ENCODE measurements at regions of chr18 and their contacts with region 1.

Region 1: DNA sequence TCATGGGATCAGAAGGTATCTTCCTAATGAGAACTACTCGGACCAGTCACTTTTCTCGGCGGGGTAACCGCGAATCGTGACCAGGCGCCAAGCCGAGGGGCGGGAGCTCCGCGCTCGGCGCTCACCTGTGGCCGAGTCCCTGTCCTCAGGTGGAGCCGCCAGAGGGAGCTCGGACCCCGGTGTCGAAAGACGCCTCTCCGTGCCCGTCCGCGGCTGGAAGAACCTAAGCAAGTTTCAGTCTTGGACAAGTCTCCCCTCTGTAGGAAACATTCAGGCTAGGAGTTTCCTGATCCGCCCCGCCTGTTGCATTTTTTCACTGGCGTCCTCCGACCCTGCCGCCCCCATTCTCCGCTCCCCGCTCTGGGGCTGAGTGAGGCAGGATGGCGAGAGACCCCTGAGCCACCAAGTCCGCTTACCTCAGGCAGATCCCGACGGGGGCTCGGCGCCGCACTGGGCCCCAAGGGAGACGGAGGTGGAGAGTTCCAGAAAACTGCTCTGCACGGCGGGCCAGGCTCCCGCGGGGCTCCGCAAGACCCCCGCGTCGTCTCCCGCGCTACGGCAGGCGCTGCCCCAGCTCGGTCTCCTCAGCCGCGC is 478 bp downstream of the DSEL start:
- DNase-seq: peak; percentile 85
- ATAC-seq: peak; percentile 16
- H3K4me3 ChIP-seq: peak overlapping the region; percentile 96
- H3K27ac ChIP-seq: peak overlapping the region; percentile 96
- H3K4me1 ChIP-seq: peaks cover 15% of the 10 kb centered on the region
- H3K27me3 ChIP-seq: no peaks in the 10 kb centered on the region
- CTCF ChIP-seq: peak; percentile 87
- POLR2A ChIP-seq: no peak; the same call in none of the 2 replicates
- RAD21 ChIP-seq: peak; percentile 92

Region 2: DNA sequence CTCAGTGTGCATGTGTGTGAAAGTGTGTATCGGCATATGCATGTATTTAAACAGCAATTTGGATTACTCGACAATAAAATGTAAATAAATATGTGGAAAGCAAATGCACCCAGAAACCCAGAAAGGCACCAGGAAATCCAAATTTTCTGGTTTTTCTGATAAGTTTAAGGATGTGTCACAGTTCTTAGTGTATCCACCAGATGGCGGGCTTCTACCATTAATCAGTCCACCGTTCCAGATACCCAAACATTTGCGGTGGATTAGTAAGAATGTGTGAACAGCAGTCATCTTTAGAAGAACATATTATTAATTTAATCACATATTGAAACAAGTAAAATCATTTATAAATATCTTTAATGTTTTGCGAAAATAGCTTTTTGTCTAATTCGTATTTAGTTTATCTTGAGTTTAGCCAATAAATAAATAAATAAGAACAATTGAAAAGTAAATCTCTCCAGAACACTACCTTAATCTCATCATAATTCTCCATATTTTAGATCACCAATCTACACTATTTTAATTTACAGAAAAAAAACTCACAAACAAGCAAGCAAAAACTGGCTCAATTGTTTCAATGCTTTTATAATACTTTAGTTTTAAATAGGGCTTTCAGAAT is 298.4 kb before region 1 on chr18:
- CTCF ChIA-PET with region 1: no interaction called
- POLR2A ChIA-PET with region 1: no interaction called
- dilution Hi-C with region 1: no loop called
- in situ Hi-C with region 1: loop called (anchors 5 kb)
- intact Hi-C with region 1: loop called (anchors 1 kb)
- DNase-seq: peak; percentile 78
- ATAC-seq: peak; percentile 95
- H3K4me3 ChIP-seq: no peak overlapping the region
- H3K27ac ChIP-seq: no peak overlapping the region
- H3K4me1 ChIP-seq: no peaks in the 10 kb centered on the region
- H3K27me3 ChIP-seq: no peaks in the 10 kb centered on the region
- CTCF ChIP-seq: peak; percentile 86
- POLR2A ChIP-seq: 0 out of 2 replicates have a peak, but pooled peaks have one; percentile 32
- RAD21 ChIP-seq: peak; percentile 94

Region 3: DNA sequence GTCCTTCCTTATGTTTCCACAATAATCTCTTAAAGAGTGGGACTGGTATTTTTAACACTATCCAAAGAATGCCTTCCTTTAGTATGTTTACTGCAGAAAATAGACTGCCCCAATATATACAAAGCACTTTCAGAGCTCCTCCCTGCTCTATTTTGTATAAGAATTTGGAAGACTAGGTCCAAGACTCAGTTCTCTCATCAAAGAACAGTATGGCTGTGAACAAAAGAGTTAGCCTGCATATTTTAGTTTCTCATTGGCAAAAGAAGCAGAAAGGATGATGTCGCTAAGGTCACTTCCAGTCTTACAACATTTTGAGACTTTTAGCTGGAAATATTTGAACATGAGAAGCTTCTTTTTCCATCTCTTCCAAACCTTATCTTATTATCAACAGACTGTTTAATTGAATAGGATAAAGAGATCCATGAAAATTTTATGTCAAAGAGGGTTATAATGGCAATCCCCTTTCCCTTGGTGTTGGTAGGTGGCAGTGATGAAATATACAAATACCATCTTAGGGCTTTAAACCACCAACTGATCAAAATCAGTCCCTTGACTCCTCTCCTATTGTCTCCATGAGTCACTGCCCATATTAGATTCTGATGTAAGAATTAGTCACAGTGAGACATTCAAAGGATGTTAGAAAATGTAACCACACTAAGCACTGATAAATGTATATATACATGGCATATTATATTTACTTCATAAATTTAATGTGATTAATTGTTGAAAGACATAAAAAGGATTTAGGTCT is 267.3 kb after region 1 on chr18:
- CTCF ChIA-PET with region 1: no interaction called
- POLR2A ChIA-PET with region 1: no interaction called
- dilution Hi-C with region 1: no loop called
- in situ Hi-C with region 1: no loop called
- intact Hi-C with region 1: loop called (anchors 5 kb)
- DNase-seq: peak; percentile 93
- ATAC-seq: peak; percentile 81
- H3K4me3 ChIP-seq: no peak overlapping the region
- H3K27ac ChIP-seq: peak overlapping the region; percentile 21; the same call in 1 of the 2 replicates
- H3K4me1 ChIP-seq: peaks cover 5% of the 10 kb centered on the region; the same call in 1 of the 2 replicates
- H3K27me3 ChIP-seq: no peaks in the 10 kb centered on the region
- CTCF ChIP-seq: no peak
- POLR2A ChIP-seq: no peak
- RAD21 ChIP-seq: no peak

Region 4: GRCh38 chr18:67932271-67932670 is 416.2 kb after region 1 on chr18:
- CTCF ChIA-PET with region 1: no interaction called
- POLR2A ChIA-PET with region 1: no interaction called
- dilution Hi-C with region 1: no loop called
- in situ Hi-C with region 1: no loop called
- intact Hi-C with region 1: loop called (anchors 5 kb)
- DNase-seq: no peak
- ATAC-seq: no peak
- H3K4me3 ChIP-seq: no peak overlapping the region
- H3K27ac ChIP-seq: no peak overlapping the region
- H3K4me1 ChIP-seq: peaks cover 6% of the 10 kb centered on the region
- H3K27me3 ChIP-seq: no peaks in the 10 kb centered on the region
- CTCF ChIP-seq: no peak
- POLR2A ChIP-seq: no peak
- RAD21 ChIP-seq: no peak

Region 5: DNA sequence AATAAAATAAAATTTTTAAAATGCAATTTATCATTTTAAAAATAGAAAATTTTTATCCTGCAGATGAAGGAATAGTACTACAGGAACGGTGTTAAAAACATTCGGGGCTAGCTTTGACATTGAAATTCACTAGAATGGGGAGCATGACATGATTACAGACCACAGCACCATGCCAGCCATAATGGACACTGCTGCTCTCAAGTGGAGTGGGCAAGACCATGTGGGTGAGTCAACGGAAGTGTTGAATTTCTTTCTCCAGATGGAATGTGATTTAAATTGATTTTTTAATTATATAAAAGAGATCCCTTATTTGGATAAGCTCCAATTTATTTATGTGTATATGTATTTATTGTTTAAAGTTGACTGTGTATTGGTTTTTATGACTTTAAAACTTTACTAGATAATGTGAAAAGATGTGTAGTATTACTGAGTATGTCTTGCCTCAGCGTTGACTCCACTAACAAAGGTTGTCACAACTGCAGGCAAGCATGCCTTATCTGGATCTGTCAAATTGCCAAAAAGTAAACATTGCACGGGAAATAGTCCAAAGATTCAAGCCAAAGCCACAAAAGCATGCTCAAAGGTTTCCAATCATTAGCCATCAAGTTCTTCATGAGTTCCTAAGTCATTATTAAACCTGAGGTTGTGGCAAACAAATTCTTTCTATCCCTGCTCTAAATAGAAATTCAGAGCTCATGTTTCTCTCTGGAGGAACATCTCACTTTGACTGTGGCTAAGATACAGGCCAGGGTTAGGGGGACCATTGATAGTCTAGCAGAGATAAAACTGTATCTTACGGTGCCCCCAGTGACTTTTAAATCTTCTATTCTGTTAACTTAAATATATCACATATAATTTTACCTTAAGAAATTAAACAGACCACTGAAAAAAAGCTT is 662.0 kb after region 1 on chr18:
- CTCF ChIA-PET with region 1: no interaction called
- POLR2A ChIA-PET with region 1: no interaction called
- dilution Hi-C with region 1: no loop called
- in situ Hi-C with region 1: no loop called
- intact Hi-C with region 1: loop called (anchors 2 kb)
- DNase-seq: peak; percentile 99
- ATAC-seq: peak; percentile 96
- H3K4me3 ChIP-seq: no peak overlapping the region
- H3K27ac ChIP-seq: peak overlapping the region; percentile 91; the same call in 1 of the 2 replicates
- H3K4me1 ChIP-seq: peaks cover 6% of the 10 kb centered on the region; the same call in 1 of the 2 replicates
- H3K27me3 ChIP-seq: no peaks in the 10 kb centered on the region
- CTCF ChIP-seq: no peak
- POLR2A ChIP-seq: no peak
- RAD21 ChIP-seq: peak; percentile 9; the same call in 1 of the 2 replicates

Region 6: GRCh38 chr18:68623342-68623741 is 1107.3 kb after region 1 on chr18:
- CTCF ChIA-PET with region 1: no interaction called
- POLR2A ChIA-PET with region 1: no interaction called
- dilution Hi-C with region 1: no loop called
- in situ Hi-C with region 1: loop called (anchors 10 kb)
- intact Hi-C with region 1: loop called (anchors 1 kb)
- DNase-seq: peak; percentile 84
- ATAC-seq: peak; percentile 90
- H3K4me3 ChIP-seq: no peak overlapping the region
- H3K27ac ChIP-seq: no peak overlapping the region
- H3K4me1 ChIP-seq: no peaks in the 10 kb centered on the region
- H3K27me3 ChIP-seq: no peaks in the 10 kb centered on the region
- CTCF ChIP-seq: peak; percentile 89
- POLR2A ChIP-seq: peak; percentile 50; the same call in 1 of the 2 replicates
- RAD21 ChIP-seq: peak; percentile 96

Region 7: GRCh38 chr18:68735483-68736343 is 1219.7 kb after region 1 on chr18:
- CTCF ChIA-PET with region 1: no interaction called
- POLR2A ChIA-PET with region 1: no interaction called
- dilution Hi-C with region 1: no loop called
- in situ Hi-C with region 1: no loop called
- intact Hi-C with region 1: loop called (anchors 1 kb)
- DNase-seq: peak; percentile 74
- ATAC-seq: peak; percentile 94
- H3K4me3 ChIP-seq: no peak overlapping the region
- H3K27ac ChIP-seq: no peak overlapping the region
- H3K4me1 ChIP-seq: no peaks in the 10 kb centered on the region
- H3K27me3 ChIP-seq: no peaks in the 10 kb centered on the region
- CTCF ChIP-seq: peak; percentile 83
- POLR2A ChIP-seq: no peak
- RAD21 ChIP-seq: peak; percentile 90

Measured in IMR-90 (cell line).